ENCODE measurements at regions of chr12 and their contacts with region 1.

Region 1: DNA sequence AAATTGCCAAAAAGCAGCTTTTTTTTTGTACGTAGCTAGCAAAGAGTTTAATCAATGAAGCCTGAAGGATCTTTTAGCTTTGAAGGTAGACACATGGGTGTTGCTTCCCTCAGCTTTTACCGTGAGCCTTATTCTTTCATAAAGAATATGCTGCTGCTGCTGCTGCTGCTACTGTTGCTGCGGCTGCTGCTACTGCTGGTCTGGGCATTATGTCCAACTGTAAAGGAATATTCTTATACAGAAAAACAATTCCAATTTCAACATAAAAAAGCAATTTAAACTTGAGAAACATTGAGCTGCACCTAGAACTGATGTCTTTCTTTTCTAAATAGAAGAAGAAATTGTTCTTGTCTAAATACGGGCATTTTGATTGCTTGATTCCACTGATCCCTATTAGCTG is 38.9 kb upstream of the PPP1R12A start:
- DNase-seq: no peak
- ATAC-seq: no peak
- H3K4me3 ChIP-seq: no peak overlapping the region
- H3K27ac ChIP-seq: no peak overlapping the region
- H3K4me1 ChIP-seq: no peaks in the 10 kb centered on the region
- H3K27me3 ChIP-seq: no peaks in the 10 kb centered on the region
- CTCF ChIP-seq: no peak
- POLR2A ChIP-seq: no peak
- RAD21 ChIP-seq: no peak

Region 2: DNA sequence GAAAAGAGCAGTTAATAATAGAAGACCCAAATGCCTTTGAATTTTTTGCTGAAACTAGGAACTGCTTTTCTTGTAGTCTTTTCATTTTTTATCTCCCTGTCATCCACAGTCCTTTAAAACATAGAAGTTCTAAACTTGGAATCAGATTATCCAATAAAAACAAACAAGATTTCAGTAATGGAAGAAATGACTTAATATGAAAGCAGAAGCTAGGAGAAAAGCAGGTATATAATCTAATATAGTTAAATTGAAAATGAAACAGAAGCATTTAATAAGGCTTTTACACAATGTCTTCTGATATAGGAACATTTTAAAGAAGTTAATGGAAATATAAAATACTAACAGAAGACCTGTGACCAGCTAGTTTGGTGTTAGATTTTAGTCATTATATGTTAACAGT is 65.4 kb before region 1 on chr12:
- CTCF ChIA-PET with region 1: no interaction called
- POLR2A ChIA-PET with region 1: no interaction called
- dilution Hi-C with region 1: no loop called
- in situ Hi-C with region 1: no loop called
- intact Hi-C with region 1: loop called (anchors 2 kb)
- DNase-seq: no peak
- ATAC-seq: no peak
- H3K4me3 ChIP-seq: no peak overlapping the region
- H3K27ac ChIP-seq: no peak overlapping the region
- H3K4me1 ChIP-seq: peaks cover 3% of the 10 kb centered on the region; the same call in 1 of the 2 replicates
- H3K27me3 ChIP-seq: no peaks in the 10 kb centered on the region
- CTCF ChIP-seq: no peak
- POLR2A ChIP-seq: no peak
- RAD21 ChIP-seq: no peak